HEK293T (cell line): ENCODE measurements at regions of chr6 and their contacts with region 1.

Region 1: GRCh38 chr6:149028767-149029405 is 282.1 kb downstream of the UST start:
- DNase-seq: peak; percentile 65

Region 2: GRCh38 chr6:148578245-148578732 is 450.6 kb before region 1 on chr6:
- CTCF ChIA-PET with region 1: interaction called, 16 read pairs
- POLR2A ChIA-PET with region 1: no interaction called
- DNase-seq: peak; percentile 88